Left cardiac atrium (tissue), 4 donors: ENCODE measurements at regions of chr19 and their contacts with region 1.

Region 1: DNA sequence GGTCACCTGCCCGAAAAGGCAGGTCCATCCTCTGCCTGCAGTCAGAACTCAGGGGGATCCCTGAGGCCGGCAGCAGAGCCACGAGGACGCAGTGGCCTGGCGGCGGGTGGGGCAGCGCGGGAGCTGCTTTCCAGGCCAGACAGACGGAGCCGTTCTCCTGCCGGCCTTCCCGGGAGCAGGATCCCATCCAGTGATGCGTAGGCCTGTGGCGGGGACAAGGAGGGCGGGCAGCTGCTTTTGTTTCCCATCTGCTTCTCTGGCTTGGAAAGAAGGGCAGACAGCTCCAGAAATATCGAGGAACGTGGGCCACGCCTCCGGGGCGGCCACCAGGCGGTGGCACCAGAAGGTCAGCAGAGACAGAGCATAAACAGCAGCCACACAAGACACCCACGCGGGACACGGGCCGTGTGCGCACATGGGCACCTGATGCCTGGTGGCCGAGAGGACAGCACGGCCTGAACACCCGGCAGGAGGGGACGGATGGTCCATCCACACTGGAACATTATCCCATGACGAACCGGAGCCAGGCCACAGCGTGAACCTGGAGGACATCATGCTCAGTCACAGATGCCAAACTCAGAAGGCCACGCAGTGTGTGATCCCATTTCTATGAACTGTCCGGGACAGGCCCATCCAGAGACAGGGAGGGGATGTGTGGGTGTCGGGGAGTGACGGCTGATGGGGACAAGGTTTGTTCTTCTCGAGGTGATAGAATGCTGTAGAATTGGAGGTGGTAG is 13.9 kb upstream of the MKNK2 start:
- DNase-seq: peak; percentile 63
- ATAC-seq: peak in 1 of 2 donors; percentile 6

Region 2: DNA sequence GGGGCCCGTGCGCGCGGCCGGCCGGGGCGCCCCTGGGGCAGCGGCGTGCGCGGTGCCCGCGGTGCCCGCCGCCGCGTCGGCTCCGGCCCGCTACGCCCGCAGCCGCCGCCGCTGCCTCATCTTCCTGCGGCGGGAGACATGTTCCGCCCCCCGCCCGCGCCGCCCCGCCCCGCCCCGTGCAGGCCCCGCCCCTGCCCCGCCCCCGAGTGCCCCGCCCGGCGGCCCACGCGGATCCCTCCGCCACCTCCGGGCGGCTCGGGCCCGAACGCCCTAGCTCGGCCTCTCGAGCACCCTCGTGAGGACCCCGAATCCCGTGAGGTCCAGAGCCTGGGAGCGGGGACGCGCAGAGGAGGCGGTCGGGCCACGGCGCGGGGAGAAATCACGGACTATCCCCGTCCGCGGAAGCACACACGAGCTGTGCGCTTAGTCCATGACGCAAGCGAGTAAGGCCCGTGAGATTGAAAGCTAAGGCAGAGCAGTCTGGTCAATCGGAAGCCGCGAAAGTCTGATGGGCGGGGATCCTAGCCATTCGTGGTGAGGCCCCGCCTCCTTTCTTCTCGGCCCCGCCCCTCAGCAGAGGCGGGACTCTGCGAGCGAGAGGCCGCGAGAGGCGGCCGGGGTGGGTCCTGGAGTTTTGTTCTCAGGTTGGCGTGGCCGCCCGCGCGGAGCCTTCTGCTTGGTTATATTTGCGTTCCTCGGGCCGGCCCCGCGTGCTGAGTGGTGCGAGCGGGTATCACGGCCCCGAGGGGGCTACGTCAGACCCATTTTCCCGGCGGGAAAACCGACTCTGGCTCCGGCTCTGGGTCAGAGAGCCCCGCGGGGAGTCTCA is 412.3 kb before region 1 on chr19 and contains the start of gene TCF3:
- intact Hi-C with region 1: no loop called
- DNase-seq: peak; percentile 98
- ATAC-seq: peak; percentile 99
- total RNA-seq, gene TCF3: 24.1 to 25.8 TPM

Region 3: GRCh38 chr19:2021453-2022140 is 43.4 kb before region 1 on chr19:
- intact Hi-C with region 1: loop called (anchors 1 to 5 kb)
- DNase-seq: no peak
- ATAC-seq: no peak

Region 4: GRCh38 chr19:2041683-2042484 is 23.1 kb before region 1 on chr19:
- intact Hi-C with region 1: loop called in 1 of 2 experiments (anchors 2 kb)
- DNase-seq: peak; percentile 98
- ATAC-seq: peak; percentile 93

Region 5: GRCh38 chr19:2051773-2052672 is 12.9 kb before region 1 on chr19:
- intact Hi-C with region 1: no loop called
- DNase-seq: peak; percentile 76
- ATAC-seq: peak in 1 of 2 donors; percentile 14

Region 6: DNA sequence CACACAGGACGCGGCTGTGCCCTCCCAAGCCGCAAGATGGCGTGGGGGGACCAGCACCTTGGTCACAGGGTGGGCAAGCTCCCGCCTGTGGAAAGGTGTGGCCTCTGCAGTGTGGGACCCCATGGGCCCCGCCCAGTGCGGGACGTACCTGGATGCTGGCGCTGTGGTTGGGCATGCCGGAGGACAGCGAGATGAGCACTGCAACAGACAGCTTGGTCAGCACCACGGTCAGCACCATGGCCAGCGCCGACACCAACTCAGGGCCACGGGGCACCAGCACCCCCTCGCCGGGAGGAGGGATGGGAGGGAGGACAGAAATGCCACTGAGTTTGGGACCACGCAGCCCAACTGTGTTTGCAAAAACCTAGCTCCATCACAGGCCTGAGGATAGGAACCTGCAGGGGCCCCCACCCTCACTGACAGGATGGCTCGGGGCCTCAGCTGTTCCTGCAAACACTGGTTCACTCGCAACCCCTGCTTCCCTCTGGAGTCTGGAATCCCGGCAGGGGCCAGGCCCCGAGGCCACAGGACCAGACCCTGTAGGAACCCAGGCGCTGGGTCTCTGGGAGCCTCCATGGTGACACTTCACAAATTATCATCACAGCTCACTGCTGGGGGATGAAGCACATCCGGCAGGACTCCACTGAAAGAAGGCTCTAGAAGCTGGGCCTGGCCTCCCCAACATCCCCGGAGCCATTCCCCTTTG is 58.9 kb after region 1 on chr19:
- intact Hi-C with region 1: no loop called
- DNase-seq: no peak
- ATAC-seq: peak in 1 of 2 donors; percentile 13

Region 7: DNA sequence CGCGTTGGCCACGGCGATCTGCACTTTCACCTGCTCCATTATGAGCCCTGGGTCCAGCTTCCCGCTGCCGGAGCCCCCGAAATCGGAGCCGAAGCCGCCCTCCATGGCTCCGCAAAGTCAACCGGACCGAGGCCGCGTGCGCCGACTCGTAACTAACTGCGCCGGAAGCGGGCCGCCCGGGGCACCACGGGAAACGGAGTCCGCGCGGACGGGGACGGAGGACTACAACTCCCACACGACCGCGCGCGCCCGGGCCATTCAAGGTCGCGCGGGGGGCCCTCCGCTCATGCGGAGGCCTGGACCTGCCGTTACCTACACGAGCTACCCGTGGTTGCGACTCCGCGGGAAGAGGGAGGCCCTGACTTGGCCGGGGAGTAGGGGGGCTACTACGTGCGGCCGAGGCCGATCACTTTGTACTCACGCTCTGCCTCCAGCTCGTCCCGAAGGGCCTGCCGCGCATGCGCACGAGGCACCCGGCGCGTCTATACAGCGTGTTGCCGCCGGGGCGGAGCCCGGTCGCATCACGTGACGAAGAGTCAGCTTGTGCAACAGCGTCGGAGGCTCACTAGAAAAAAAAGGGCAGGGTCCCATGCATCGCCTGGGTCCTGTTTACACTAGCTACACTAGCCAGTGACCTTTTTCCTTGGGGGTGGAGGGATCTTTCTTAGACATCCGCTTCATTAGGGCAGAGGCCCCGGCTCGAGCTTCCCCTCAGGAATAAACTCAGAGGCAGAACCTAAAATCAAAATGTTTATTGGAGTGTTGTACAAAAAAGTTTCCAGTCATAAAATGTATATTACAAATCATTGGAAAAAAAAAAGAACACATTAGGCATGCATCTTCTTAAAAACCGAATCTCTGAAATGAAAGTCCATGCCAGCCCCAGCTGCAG is 362.7 kb after region 1 on chr19 and contains the start of gene TIMM13:
- intact Hi-C with region 1: no loop called
- DNase-seq: peak; percentile 98
- ATAC-seq: peak; percentile 94 to 95
- total RNA-seq, gene TIMM13: 76.8 to 78.7 TPM